Caco-2 (cell line): ENCODE measurements at regions of chrX and their contacts with region 1.

Region 1: GRCh38 chrX:55907968-55908607 is 190.5 kb downstream of the RRAGB start:
- DNase-seq: peak; percentile 77 to 79
- H3K4me3 ChIP-seq: peak overlapping the region; percentile 59
- H3K4me3 Mint-ChIP-seq: peak overlapping the region; percentile 98
- H3K27ac Mint-ChIP-seq: peak overlapping the region; percentile 94
- H3K4me1 ChIP-seq: no peaks in the 10 kb centered on the region
- H3K4me1 Mint-ChIP-seq: peaks cover 9% of the 10 kb centered on the region
- H3K27me3 ChIP-seq: no peaks in the 10 kb centered on the region
- H3K27me3 Mint-ChIP-seq: no peaks in the 10 kb centered on the region
- CTCF ChIP-seq: peak; percentile 47 to 60

Region 2: DNA sequence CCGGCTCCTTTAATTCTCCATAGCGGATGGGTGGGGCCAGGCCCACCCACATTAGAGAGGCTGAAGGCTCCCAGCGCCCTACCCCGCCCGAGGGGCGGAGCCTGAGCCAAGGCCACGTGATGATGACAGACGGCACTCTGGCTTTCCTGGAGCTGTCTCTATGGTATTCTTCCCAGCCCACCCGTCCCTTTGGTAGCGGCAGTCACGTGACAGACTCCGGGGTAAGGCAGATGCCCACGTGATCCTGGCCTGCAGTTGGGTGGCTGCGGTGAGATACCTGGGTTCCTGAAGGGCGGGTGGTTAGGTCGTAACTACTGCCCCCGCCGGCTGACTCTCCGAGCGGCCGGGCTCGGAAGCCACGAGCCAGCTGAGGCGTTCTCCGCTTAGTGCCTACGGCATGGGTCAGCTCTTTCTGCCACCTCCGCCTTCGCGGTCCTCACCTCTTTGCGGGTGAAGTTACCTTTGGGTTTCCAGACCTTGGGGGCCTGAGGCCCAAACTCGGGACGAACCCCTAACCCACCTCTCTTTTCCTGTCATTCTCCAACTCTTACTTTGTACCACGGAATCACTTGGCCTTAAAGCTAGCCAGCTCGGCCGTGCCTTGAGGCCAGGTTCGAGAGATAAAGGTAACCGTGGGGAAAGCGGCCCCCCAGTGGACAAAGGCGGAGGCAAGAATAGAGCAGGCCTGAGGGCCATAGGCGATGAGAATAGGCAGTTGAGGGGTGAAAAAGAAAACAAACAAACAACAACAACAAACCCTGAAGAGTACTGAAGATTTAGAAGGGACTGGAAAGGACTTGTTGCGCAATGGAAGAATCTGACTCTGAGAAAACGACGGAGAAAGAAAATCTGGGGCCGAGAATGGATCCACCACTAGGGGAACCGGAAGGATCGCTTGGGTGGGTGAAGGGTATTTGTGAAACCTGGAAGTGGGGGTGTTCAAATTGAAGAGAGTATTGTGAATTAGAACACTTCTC is 190.3 kb before region 1 on chrX and contains the start of gene RRAGB:
- CTCF ChIA-PET with region 1: interaction called, 7 read pairs
- POLR2A ChIA-PET with region 1: no interaction called
- intact Hi-C with region 1: loop called (anchors 5 kb)
- DNase-seq: peak; percentile 92 to 95
- H3K4me3 ChIP-seq: peak within 1 kb of the TSS; percentile 79
- H3K4me3 Mint-ChIP-seq: peak within 1 kb of the TSS; percentile 97
- H3K27ac Mint-ChIP-seq: peak within 1 kb of the TSS; percentile 56
- H3K4me1 ChIP-seq: no peaks in the 10 kb centered on the region
- H3K4me1 Mint-ChIP-seq: peaks cover 7% of the 10 kb centered on the region
- H3K27me3 ChIP-seq: no peaks in the 10 kb centered on the region
- H3K27me3 Mint-ChIP-seq: no peaks in the 10 kb centered on the region
- CTCF ChIP-seq: peak; percentile 59 to 67
- total RNA-seq, gene RRAGB: 9.5 and 10.8 TPM in 2 replicates

Region 3: DNA sequence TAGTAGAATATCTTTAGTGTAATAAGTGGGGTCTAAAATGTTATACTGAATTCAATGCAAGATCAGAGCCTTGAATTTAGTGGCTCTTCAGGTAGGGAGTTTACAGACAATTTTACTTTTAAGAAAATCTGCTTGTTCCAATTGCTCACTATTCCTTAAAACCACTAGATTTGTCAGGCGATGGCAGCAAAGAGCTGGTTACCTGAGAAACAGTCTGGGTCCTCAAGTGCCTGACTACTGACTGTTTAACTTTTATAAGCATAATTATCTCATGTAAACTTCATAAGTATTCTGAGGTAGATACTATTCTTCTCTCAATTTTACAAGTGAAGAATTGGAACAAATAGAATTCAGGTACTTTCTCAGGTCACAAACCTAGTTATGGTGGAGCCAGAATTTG is 106.3 kb before region 1 on chrX:
- CTCF ChIA-PET with region 1: no interaction called
- POLR2A ChIA-PET with region 1: no interaction called
- intact Hi-C with region 1: loop called (anchors 1 kb)
- DNase-seq: no peak
- H3K4me3 ChIP-seq: no peak overlapping the region
- H3K4me3 Mint-ChIP-seq: no peak overlapping the region
- H3K27ac Mint-ChIP-seq: no peak overlapping the region
- H3K4me1 ChIP-seq: no peaks in the 10 kb centered on the region
- H3K4me1 Mint-ChIP-seq: no peaks in the 10 kb centered on the region
- H3K27me3 ChIP-seq: no peaks in the 10 kb centered on the region
- H3K27me3 Mint-ChIP-seq: no peaks in the 10 kb centered on the region
- CTCF ChIP-seq: peak; percentile 6 to 18

Region 4: DNA sequence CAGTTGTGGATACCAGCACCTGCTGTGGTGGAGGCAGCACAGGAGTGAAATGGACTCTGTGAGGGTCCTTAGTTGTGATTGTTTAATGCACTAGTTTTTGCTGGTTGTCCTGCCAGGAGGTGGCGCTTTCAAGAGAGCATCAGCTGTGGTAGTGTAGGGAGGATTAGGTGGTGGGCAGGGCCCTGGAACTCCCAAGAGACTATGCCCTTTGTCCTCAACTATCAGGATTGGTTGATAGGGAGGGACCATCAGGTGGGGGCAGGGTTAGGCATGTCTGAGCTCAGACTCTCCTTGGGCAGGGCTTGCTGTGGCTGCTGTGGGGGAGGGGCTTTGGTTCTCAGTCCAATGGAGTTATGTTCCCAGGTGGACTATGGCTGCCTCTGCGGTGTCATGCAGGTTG is 68.6 kb before region 1 on chrX:
- CTCF ChIA-PET with region 1: interaction called, 10 read pairs
- POLR2A ChIA-PET with region 1: no interaction called
- intact Hi-C with region 1: loop called (anchors 1 kb)
- DNase-seq: peak; percentile 45 to 81
- H3K4me3 ChIP-seq: no peak overlapping the region
- H3K4me3 Mint-ChIP-seq: no peak overlapping the region
- H3K27ac Mint-ChIP-seq: no peak overlapping the region
- H3K4me1 ChIP-seq: peaks cover 8% of the 10 kb centered on the region; the same call in 1 of the 2 replicates
- H3K4me1 Mint-ChIP-seq: no peaks in the 10 kb centered on the region
- H3K27me3 ChIP-seq: no peaks in the 10 kb centered on the region
- H3K27me3 Mint-ChIP-seq: no peaks in the 10 kb centered on the region
- CTCF ChIP-seq: no peak

Region 5: GRCh38 chrX:56130031-56130430 is 221.9 kb after region 1 on chrX:
- CTCF ChIA-PET with region 1: no interaction called
- POLR2A ChIA-PET with region 1: no interaction called
- intact Hi-C with region 1: loop called (anchors 5 kb)
- DNase-seq: no peak
- H3K4me3 ChIP-seq: no peak overlapping the region
- H3K4me3 Mint-ChIP-seq: peak overlapping the region; percentile 37
- H3K27ac Mint-ChIP-seq: peak overlapping the region; percentile 91
- H3K4me1 ChIP-seq: peaks cover 14% of the 10 kb centered on the region
- H3K4me1 Mint-ChIP-seq: peaks cover 14% of the 10 kb centered on the region
- H3K27me3 ChIP-seq: no peaks in the 10 kb centered on the region
- H3K27me3 Mint-ChIP-seq: no peaks in the 10 kb centered on the region
- CTCF ChIP-seq: no peak

Region 6: GRCh38 chrX:56248492-56248891 is 340.4 kb after region 1 on chrX:
- CTCF ChIA-PET with region 1: interaction called, 6 read pairs
- POLR2A ChIA-PET with region 1: no interaction called
- intact Hi-C with region 1: loop called (anchors 1 kb)
- DNase-seq: peak; percentile 41 to 58
- H3K4me3 ChIP-seq: no peak overlapping the region
- H3K4me3 Mint-ChIP-seq: no peak overlapping the region
- H3K27ac Mint-ChIP-seq: no peak overlapping the region
- H3K4me1 ChIP-seq: no peaks in the 10 kb centered on the region
- H3K4me1 Mint-ChIP-seq: no peaks in the 10 kb centered on the region
- H3K27me3 ChIP-seq: no peaks in the 10 kb centered on the region
- H3K27me3 Mint-ChIP-seq: no peaks in the 10 kb centered on the region
- CTCF ChIP-seq: peak; percentile 49 to 55